ENCODE measurements at regions of chr17 and their contacts with region 1.

Region 1: GRCh38 chr17:35486920-35487732 is 38.6 kb upstream of the SLFN13 start:
- DNase-seq: peak; percentile 76
- H3K4me3 Mint-ChIP-seq: peak overlapping the region; percentile 81
- H3K27ac Mint-ChIP-seq: peak overlapping the region; percentile 85
- H3K4me1 Mint-ChIP-seq: peaks cover 65% of the 10 kb centered on the region
- H3K27me3 Mint-ChIP-seq: no peaks in the 10 kb centered on the region

Region 2: DNA sequence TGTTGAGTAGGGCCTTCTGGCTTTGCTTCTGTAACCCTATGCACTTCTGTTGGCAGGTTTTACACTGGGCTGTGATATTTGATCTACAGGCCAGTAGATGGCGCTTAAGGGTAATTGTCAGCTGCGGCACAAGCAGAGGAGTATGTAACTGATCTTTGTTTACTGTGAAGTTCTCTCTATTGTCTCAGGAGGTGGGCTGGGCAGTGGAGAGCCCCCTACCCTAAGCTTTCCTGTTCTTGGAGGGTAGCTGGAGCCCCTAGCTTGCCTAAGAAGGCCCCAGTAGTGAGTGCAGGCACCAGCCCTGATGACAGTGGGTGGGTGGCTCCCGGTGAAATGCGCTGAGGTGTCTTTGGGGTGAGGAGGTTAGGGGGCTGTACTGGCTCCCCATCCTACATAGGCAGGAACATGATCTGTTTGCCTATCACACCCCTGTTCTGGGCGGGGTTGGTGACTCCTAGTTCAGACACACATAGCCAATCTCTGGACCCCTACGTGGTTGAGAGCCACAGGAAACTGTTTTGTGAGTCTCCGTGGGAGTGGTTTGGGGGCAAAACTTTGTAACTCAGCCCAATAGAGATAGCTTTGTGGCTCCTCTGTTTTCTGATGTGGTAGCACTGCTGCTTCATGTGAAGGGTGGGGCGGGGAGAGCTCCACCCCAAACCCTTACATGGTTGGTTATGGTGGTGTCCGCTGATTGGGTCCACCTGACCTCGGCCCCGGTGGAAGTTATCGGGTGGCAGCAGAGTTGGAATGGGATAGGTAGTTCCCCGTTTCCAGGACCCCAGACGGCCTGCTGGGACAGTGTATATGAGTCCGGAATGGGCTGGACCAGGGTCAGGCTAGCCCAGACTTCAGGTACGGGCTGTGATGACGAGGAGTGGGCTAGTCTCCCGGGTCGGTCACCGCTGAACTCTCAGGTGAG is 174.1 kb before region 1 on chr17:
- CTCF ChIA-PET with region 1: interaction called, 20 read pairs
- POLR2A ChIA-PET with region 1: interaction called, 7 read pairs
- DNase-seq: peak; percentile 84
- H3K4me3 Mint-ChIP-seq: peak overlapping the region; percentile 83
- H3K27ac Mint-ChIP-seq: peak overlapping the region; percentile 90
- H3K4me1 Mint-ChIP-seq: peaks cover 42% of the 10 kb centered on the region
- H3K27me3 Mint-ChIP-seq: peaks cover 3% of the 10 kb centered on the region

Region 3: GRCh38 chr17:35448214-35448898 is 38.8 kb before region 1 on chr17 and contains the start of gene SLFN13:
- CTCF ChIA-PET with region 1: interaction called, 3 read pairs
- POLR2A ChIA-PET with region 1: interaction called, 10 read pairs
- DNase-seq: peak; percentile 91
- H3K4me3 Mint-ChIP-seq: peak within 1 kb of the TSS; percentile 70
- H3K27ac Mint-ChIP-seq: peak within 1 kb of the TSS; percentile 72
- H3K4me1 Mint-ChIP-seq: peaks cover 25% of the 10 kb centered on the region
- H3K27me3 Mint-ChIP-seq: no peaks in the 10 kb centered on the region
- total RNA-seq, gene SLFN13: 82.6 to 96.7 TPM

Region 4: GRCh38 chr17:35460354-35460851 is 26.7 kb before region 1 on chr17:
- CTCF ChIA-PET with region 1: no interaction called
- POLR2A ChIA-PET with region 1: interaction called, 15 read pairs
- DNase-seq: peak; percentile 73
- H3K4me3 Mint-ChIP-seq: peak overlapping the region; percentile 48
- H3K27ac Mint-ChIP-seq: peak overlapping the region; percentile 72
- H3K4me1 Mint-ChIP-seq: peaks cover 31% of the 10 kb centered on the region
- H3K27me3 Mint-ChIP-seq: no peaks in the 10 kb centered on the region

Region 5: DNA sequence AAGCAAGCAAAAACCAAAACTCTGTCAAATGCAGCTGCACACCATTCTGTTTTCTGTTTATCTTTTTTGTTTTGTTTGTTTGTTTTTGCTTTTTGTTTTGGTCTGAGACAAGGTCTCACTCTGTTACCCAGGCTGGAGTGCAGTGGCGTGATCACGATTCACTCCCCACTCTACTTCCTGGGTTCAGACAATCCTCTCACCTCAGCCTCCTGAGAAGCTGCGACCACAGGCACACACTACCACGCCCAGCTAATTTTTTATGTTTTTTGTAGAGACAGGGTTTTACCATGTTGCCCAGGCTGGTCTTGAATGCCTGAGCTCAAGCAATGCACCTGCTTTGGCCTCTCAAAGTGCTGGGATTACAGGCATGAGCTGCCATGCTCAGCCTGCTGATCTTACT is 19.3 kb before region 1 on chr17:
- CTCF ChIA-PET with region 1: interaction called, 5 read pairs
- POLR2A ChIA-PET with region 1: interaction called, 15 read pairs
- DNase-seq: peak; percentile 64
- H3K4me3 Mint-ChIP-seq: no peak overlapping the region
- H3K27ac Mint-ChIP-seq: peak overlapping the region; percentile 58
- H3K4me1 Mint-ChIP-seq: peaks cover 52% of the 10 kb centered on the region
- H3K27me3 Mint-ChIP-seq: no peaks in the 10 kb centered on the region

Region 6: GRCh38 chr17:35519439-35519838 is 32.3 kb after region 1 on chr17:
- CTCF ChIA-PET with region 1: no interaction called
- POLR2A ChIA-PET with region 1: interaction called, 10 read pairs
- DNase-seq: no peak
- H3K4me3 Mint-ChIP-seq: peak overlapping the region; percentile 31
- H3K27ac Mint-ChIP-seq: peak overlapping the region; percentile 38
- H3K4me1 Mint-ChIP-seq: peaks cover 90% of the 10 kb centered on the region
- H3K27me3 Mint-ChIP-seq: no peaks in the 10 kb centered on the region

Region 7: GRCh38 chr17:35930211-35931065 is 443.3 kb after region 1 on chr17 and contains the start of gene RDM1:
- CTCF ChIA-PET with region 1: no interaction called
- POLR2A ChIA-PET with region 1: no interaction called
- DNase-seq: peak; percentile 93
- H3K4me3 Mint-ChIP-seq: peak within 1 kb of the TSS; percentile 84
- H3K27ac Mint-ChIP-seq: peak within 1 kb of the TSS; percentile 74
- H3K4me1 Mint-ChIP-seq: peaks cover 32% of the 10 kb centered on the region
- H3K27me3 Mint-ChIP-seq: peaks cover 7% of the 10 kb centered on the region
- total RNA-seq, gene RDM1: 14.4 to 16.9 TPM

Measured in activated CD4-positive, alpha-beta memory T cell treated with anti-CD3 and anti-CD28 coated beads, Interleukin-2, amount 10 ng/mL, durations not matched to agents 7 days and 5 days (primary cell).